Transverse colon (tissue), 4 donors: ENCODE measurements at regions of chr3 and their contacts with region 1.

Region 1: DNA sequence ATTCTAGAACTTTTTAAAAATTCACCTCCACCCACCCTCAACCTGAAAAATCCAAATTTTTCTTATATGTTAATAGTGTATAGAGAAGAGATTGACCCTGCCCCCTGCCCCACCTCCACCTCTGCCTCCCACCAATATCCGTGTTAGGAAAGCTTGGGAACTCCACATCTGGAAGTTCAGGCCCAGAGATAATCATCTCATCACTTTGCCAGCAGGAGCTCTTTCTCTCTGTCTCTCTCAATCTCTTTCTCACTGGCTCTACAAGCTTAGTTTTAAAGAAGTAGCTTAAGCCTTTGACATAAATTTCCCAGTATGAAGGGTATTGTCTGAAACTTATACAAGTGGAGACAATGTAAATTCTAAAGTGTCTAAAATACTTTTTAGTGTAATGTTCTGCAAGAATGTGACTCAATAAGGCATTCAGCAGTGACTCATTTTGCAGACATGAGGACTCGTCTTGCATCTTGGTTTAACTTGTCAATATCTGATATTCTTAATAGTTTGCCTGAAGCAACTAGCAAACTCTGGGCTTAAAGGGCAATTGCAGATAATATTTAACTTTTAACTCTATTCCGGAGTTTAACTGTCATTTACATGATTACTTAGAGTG is 299.8 kb upstream of the EPHA3 start:
- DNase-seq: no peak
- H3K4me3 ChIP-seq: no peak overlapping the region
- H3K27ac ChIP-seq: no peak overlapping the region
- H3K4me1 ChIP-seq: no peaks in the 10 kb centered on the region
- H3K27me3 ChIP-seq: no peaks in the 10 kb centered on the region
- CTCF ChIP-seq: no peak
- EP300 ChIP-seq: no peak
- POLR2A ChIP-seq: no peak

Region 2: DNA sequence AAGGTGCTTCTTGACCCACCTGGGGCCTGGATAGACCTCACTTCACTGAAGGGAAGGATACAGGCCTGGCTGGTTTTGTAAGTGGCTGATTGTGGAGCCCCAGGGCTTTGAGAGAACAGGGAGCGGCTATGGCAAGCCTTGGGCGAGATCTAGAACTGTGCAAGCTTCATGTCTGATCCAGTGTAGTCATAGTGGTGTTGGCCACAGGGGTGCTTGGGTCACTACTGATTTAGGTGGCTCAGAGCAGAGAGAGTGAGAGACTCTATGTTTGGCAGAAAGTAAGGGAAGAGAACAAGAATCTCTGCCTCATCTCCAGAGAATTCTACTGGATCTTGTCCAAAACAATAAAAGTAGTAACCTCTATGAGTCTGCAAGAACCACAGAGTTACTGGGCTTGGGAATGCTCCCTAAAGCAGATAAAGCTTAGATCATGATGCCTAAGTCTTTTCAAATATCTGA is 94.3 kb before region 1 on chr3:
- in situ Hi-C with region 1: loop called in 1 of 4 experiments (anchors 25 kb)
- intact Hi-C with region 1: no loop called
- DNase-seq: no peak
- H3K4me3 ChIP-seq: no peak overlapping the region
- H3K27ac ChIP-seq: no peak overlapping the region
- H3K4me1 ChIP-seq: no peaks in the 10 kb centered on the region
- H3K27me3 ChIP-seq: no peaks in the 10 kb centered on the region
- CTCF ChIP-seq: no peak
- EP300 ChIP-seq: no peak
- POLR2A ChIP-seq: no peak

Region 3: DNA sequence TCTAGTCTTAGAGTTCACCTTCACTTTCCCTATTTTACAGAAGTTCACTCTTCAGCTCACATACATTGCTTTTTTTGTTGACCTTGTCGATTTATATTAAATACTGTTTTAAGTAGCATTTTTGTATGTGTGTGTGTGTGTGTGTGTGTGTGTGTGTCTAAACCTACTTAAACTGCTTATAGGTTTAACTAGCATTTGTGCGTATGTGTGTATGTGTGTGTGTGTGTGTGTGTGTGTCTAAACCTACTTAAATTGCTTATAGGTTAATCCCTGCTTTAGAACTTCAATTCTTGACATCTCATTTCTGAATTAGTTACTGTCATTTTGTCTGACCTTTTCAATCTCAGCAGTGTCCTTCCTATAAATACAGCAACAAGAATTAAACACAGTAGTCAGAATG is 45.0 kb after region 1 on chr3:
- in situ Hi-C with region 1: no loop called
- intact Hi-C with region 1: no loop called
- DNase-seq: no peak
- H3K4me3 ChIP-seq: no peak overlapping the region
- H3K27ac ChIP-seq: no peak overlapping the region
- H3K4me1 ChIP-seq: no peaks in the 10 kb centered on the region
- H3K27me3 ChIP-seq: no peaks in the 10 kb centered on the region
- CTCF ChIP-seq: no peak
- EP300 ChIP-seq: no peak
- POLR2A ChIP-seq: no peak